ENCODE measurements at regions of chr12 and their contacts with region 1.

Region 1: DNA sequence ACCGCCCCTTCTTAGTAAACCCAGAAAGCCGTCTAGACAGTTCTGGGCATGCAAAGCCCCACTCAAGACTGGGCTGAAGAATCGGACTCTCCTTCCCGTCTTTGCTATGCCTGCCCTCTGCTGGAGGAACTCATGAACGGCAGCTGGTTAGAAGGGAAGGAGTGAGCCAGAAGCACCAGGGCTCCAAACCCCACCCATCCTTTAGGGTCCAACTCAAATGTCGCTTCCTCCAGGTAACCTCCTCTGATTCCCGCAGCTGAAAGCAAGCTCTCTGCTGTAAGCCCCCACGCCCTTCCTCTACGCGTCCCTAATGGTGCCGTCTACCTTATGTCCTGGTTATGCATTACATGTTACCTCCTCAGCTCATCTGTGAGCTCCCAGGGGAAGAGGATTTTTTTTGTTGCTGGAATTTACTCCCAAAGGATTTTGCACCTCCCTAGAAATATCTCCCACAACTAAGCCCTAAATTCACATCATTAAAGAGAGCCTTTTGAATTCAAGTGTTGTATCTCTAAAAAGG is 59.0 kb upstream of the SCN8A start:
- DNase-seq: peak; percentile 91
- ATAC-seq: peak; percentile 77
- H3K4me3 ChIP-seq: peak overlapping the region; percentile 45; the same call in 1 of the 2 replicates
- H3K27ac ChIP-seq: peak overlapping the region; percentile 17; the same call in 1 of the 2 replicates
- H3K4me1 ChIP-seq: peaks cover 35% of the 10 kb centered on the region
- H3K27me3 ChIP-seq: no peaks in the 10 kb centered on the region
- CTCF ChIP-seq: peak; percentile 91

Region 2: GRCh38 chr12:51371295-51371953 is 160.6 kb before region 1 on chr12:
- CTCF ChIA-PET with region 1: interaction called, 13 read pairs
- POLR2A ChIA-PET with region 1: no interaction called
- intact Hi-C with region 1: loop called (anchors 1 kb)
- DNase-seq: peak; percentile 98
- ATAC-seq: peak; percentile 97
- H3K4me3 ChIP-seq: peak overlapping the region; percentile 42
- H3K27ac ChIP-seq: peak overlapping the region; percentile 95
- H3K4me1 ChIP-seq: peaks cover 42% of the 10 kb centered on the region
- H3K27me3 ChIP-seq: no peaks in the 10 kb centered on the region
- CTCF ChIP-seq: no peak

Region 3: DNA sequence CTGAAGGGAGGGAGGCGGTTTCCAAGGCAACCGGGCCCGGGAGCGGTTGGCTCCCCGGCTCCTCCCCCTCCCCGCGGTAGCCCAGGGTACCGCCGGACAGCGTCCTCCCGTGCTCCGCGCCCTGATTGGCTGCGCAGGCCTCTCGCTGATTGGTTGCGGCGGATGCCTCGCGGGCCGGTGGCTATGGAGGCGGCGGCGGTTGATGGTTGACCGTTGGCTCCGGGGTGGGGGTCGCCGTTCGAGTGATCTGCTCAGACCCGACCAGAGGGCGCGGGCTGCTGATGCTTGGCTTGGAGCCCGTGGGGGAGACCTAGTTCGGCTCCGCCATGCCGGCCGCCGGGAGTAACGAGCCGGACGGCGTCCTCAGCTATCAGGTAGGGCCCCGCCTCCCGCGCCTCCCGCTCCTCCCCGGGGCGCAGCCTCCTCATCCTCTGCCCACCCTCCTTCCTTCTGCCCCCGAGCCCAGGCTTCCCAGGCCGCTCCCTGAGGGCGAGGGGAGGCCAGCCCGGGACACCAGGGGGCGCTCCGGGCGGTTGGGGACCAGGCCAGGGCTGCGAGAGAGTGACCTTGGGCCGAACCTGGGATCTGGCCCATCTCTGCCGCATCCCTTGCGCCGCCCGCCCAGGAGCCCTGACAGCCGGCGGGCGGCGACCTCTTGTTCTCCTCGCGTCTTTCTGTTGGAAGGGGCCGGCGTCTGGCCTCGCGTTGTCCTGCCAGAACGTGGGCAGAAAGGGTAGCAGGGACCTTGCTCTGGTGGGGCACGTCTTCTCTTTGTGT is 107.2 kb before region 1 on chr12 and contains the start of gene SLC4A8:
- CTCF ChIA-PET with region 1: interaction called, 4 read pairs
- POLR2A ChIA-PET with region 1: no interaction called
- intact Hi-C with region 1: loop called (anchors 1 kb)
- DNase-seq: peak; percentile 84
- ATAC-seq: peak; percentile 94
- H3K4me3 ChIP-seq: peak within 1 kb of the TSS; percentile 75
- H3K27ac ChIP-seq: no peak within 1 kb of the TSS
- H3K4me1 ChIP-seq: peaks cover 13% of the 10 kb centered on the region
- H3K27me3 ChIP-seq: no peaks in the 10 kb centered on the region
- CTCF ChIP-seq: peak; percentile 84
- total RNA-seq, gene SLC4A8: 3.3 and 4.2 TPM in 2 replicates

Region 4: DNA sequence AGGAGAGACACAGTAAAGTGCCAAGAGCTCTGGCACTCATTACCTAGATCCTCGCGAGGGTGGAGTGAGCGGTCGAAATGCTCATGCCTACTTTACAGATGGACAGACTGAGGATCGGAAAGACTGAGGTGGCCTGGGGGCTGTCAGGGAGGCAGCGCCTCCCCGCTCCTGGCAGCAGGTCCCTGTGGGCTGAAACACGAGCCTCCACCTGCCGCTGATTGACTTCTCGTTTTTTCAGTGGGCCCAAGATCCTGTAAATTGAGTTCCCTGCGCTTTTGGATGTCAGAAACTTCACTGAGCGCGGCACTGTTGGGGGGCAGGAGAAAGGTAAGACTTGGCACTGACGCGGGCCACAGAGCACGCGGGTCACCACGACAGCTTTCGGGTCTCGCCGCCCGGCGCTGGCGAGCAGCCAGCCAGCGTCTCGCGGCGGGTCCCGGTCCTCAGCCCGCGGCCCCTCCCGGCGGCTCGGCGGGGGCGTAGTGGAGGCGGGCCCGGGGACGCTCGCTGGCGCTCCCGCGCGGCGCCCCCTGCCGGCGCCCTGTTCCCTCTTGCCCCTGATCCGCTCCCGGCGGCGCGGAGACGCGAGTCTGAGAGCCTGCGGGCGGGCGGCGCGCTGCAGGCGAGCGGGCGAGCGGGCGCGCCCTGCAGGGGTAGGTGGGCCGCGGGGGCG is 58.4 kb after region 1 on chr12:
- CTCF ChIA-PET with region 1: interaction called, 4 read pairs
- POLR2A ChIA-PET with region 1: no interaction called
- intact Hi-C with region 1: loop called (anchors 2 kb)
- DNase-seq: peak; percentile 86
- ATAC-seq: peak; percentile 75
- H3K4me3 ChIP-seq: peak overlapping the region; percentile 83
- H3K27ac ChIP-seq: no peak overlapping the region
- H3K4me1 ChIP-seq: peaks cover 24% of the 10 kb centered on the region
- H3K27me3 ChIP-seq: no peaks in the 10 kb centered on the region
- CTCF ChIP-seq: peak; percentile 33; the same call in 1 of the 2 replicates

Region 5: DNA sequence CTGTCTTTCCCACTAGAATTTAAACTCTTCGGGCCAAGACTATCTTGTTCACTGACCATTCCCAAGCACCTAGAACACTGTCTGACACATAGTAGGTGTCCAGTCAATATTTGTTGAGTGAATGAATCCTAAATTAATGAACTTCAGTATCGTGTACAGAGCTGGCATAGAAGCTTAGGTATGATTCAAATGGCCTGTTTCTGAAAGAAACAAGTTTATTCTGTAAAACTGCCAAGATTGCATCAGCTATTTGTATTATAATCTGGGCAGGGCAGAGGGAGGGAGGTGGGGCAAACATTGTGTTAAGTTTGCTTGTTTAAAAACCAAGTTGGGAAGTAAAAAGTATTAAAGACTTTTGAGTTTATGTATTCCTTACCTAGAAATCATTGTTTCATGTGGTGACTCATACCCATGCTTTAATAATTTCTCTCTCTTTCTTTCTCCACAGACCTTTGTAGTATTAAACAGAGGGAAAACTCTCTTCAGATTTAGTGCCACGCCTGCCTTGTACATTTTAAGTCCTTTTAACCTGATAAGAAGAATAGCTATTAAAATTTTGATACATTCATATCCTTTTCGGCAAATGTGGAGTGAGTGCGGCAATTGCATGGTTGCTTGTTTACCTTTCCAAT is 151.8 kb after region 1 on chr12:
- CTCF ChIA-PET with region 1: interaction called, 6 read pairs
- POLR2A ChIA-PET with region 1: no interaction called
- intact Hi-C with region 1: loop called (anchors 1 kb)
- DNase-seq: peak; percentile 93
- ATAC-seq: peak; percentile 88
- H3K4me3 ChIP-seq: peak overlapping the region; percentile 24; the same call in 1 of the 2 replicates
- H3K27ac ChIP-seq: peak overlapping the region; percentile 52
- H3K4me1 ChIP-seq: peaks cover 42% of the 10 kb centered on the region
- H3K27me3 ChIP-seq: no peaks in the 10 kb centered on the region
- CTCF ChIP-seq: no peak

Region 6: GRCh38 chr12:53220801-53221202 is 1688.8 kb after region 1 on chr12:
- CTCF ChIA-PET with region 1: no interaction called
- POLR2A ChIA-PET with region 1: interaction called, 10 read pairs
- intact Hi-C with region 1: no loop called
- DNase-seq: peak; percentile 97
- ATAC-seq: peak; percentile 65
- H3K4me3 ChIP-seq: peak overlapping the region; percentile 80
- H3K27ac ChIP-seq: peak overlapping the region; percentile 95
- H3K4me1 ChIP-seq: peaks cover 60% of the 10 kb centered on the region
- H3K27me3 ChIP-seq: no peaks in the 10 kb centered on the region
- CTCF ChIP-seq: no peak

Measured in PC-3 (cell line).